Breast epithelium (tissue), 4 donors: ENCODE measurements at regions of chr7 and their contacts with region 1.

Region 1: GRCh38 chr7:115191526-115191925 is 269.6 kb downstream of the MDFIC start:
- DNase-seq: no peak
- H3K4me3 ChIP-seq: no peak overlapping the region
- H3K27ac ChIP-seq: no peak overlapping the region
- H3K4me1 ChIP-seq: no peaks in the 10 kb centered on the region
- H3K27me3 ChIP-seq: no peaks in the 10 kb centered on the region
- CTCF ChIP-seq: no peak
- POLR2A ChIP-seq: no peak

Region 2: DNA sequence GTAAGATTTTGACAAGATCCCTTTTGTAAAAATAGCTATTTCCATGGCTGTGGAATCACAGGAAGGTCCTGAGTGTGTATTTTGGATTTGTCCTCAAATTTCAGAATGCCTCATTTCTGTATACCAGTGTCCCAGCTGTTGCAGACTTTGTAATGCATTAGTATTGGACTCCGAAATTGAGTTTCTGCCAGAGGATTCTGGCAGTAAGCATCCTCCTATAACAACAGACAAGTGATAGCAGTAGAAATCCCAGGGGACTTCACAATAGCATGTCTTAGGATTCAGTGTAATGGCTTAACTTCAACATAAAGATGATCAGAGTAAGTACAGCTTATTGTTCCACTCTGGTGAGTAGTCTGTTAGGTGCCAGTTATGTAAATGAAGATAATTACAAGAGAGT is 672.3 kb before region 1 on chr7:
- intact Hi-C with region 1: no loop called
- DNase-seq: no peak
- H3K4me3 ChIP-seq: no peak overlapping the region
- H3K27ac ChIP-seq: no peak overlapping the region
- H3K4me1 ChIP-seq: no peaks in the 10 kb centered on the region
- H3K27me3 ChIP-seq: no peaks in the 10 kb centered on the region
- CTCF ChIP-seq: no peak
- POLR2A ChIP-seq: no peak

Region 3: GRCh38 chr7:115252461-115252860 is 60.9 kb after region 1 on chr7:
- intact Hi-C with region 1: loop called (anchors 2 kb)
- DNase-seq: no peak
- H3K4me3 ChIP-seq: no peak overlapping the region
- H3K27ac ChIP-seq: no peak overlapping the region
- H3K4me1 ChIP-seq: no peaks in the 10 kb centered on the region
- H3K27me3 ChIP-seq: no peaks in the 10 kb centered on the region
- CTCF ChIP-seq: no peak
- POLR2A ChIP-seq: no peak